Caco-2 (cell line): ENCODE measurements at regions of chr10 and their contacts with region 1.

Region 1: DNA sequence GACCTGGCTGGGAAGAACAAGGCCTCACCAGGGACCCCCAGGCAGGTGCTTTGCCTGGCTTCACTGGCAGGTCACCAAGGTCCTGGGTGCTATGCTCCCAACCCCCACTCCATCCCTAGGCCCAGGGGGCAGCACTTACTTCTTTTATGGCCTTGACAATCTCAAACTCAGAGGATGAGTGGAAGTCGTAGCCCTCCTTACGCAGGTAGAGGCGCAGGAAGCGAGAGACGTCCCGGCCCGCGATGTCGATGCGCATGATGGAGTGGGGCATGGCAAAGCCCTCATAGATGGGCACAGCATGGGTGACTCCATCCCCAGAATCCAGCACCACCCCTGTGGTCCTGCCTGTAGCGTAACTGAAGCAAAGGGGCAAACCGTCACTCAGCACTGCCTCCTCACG is 18.5 kb downstream of the ACTR1A start:
- DNase-seq: no peak
- H3K4me3 ChIP-seq: no peak overlapping the region
- H3K4me3 Mint-ChIP-seq: no peak overlapping the region
- H3K27ac Mint-ChIP-seq: no peak overlapping the region
- H3K4me1 ChIP-seq: no peaks in the 10 kb centered on the region
- H3K4me1 Mint-ChIP-seq: no peaks in the 10 kb centered on the region
- H3K27me3 ChIP-seq: no peaks in the 10 kb centered on the region
- H3K27me3 Mint-ChIP-seq: no peaks in the 10 kb centered on the region
- CTCF ChIP-seq: no peak

Region 2: GRCh38 chr10:102461187-102462054 is 22.6 kb before region 1 on chr10:
- CTCF ChIA-PET with region 1: interaction called, 4 read pairs
- POLR2A ChIA-PET with region 1: no interaction called
- intact Hi-C with region 1: loop called (anchors 2 kb)
- DNase-seq: peak; percentile 94 to 98
- H3K4me3 ChIP-seq: peak overlapping the region; percentile 54
- H3K4me3 Mint-ChIP-seq: peak overlapping the region; percentile 96
- H3K27ac Mint-ChIP-seq: peak overlapping the region; percentile 78
- H3K4me1 ChIP-seq: peaks cover 32% of the 10 kb centered on the region
- H3K4me1 Mint-ChIP-seq: peaks cover 24% of the 10 kb centered on the region
- H3K27me3 ChIP-seq: no peaks in the 10 kb centered on the region
- H3K27me3 Mint-ChIP-seq: no peaks in the 10 kb centered on the region
- CTCF ChIP-seq: no peak

Region 3: GRCh38 chr10:102583435-102584417 is 99.7 kb after region 1 on chr10:
- CTCF ChIA-PET with region 1: interaction called, 13 read pairs
- POLR2A ChIA-PET with region 1: no interaction called
- intact Hi-C with region 1: loop called (anchors 5 kb)
- DNase-seq: peak; percentile 83 to 86
- H3K4me3 ChIP-seq: no peak overlapping the region
- H3K4me3 Mint-ChIP-seq: no peak overlapping the region
- H3K27ac Mint-ChIP-seq: no peak overlapping the region
- H3K4me1 ChIP-seq: no peaks in the 10 kb centered on the region
- H3K4me1 Mint-ChIP-seq: no peaks in the 10 kb centered on the region
- H3K27me3 ChIP-seq: no peaks in the 10 kb centered on the region
- H3K27me3 Mint-ChIP-seq: no peaks in the 10 kb centered on the region
- CTCF ChIP-seq: peak; percentile 78 to 93